ENCODE measurements at regions of chr13 and their contacts with region 1.

Region 1: DNA sequence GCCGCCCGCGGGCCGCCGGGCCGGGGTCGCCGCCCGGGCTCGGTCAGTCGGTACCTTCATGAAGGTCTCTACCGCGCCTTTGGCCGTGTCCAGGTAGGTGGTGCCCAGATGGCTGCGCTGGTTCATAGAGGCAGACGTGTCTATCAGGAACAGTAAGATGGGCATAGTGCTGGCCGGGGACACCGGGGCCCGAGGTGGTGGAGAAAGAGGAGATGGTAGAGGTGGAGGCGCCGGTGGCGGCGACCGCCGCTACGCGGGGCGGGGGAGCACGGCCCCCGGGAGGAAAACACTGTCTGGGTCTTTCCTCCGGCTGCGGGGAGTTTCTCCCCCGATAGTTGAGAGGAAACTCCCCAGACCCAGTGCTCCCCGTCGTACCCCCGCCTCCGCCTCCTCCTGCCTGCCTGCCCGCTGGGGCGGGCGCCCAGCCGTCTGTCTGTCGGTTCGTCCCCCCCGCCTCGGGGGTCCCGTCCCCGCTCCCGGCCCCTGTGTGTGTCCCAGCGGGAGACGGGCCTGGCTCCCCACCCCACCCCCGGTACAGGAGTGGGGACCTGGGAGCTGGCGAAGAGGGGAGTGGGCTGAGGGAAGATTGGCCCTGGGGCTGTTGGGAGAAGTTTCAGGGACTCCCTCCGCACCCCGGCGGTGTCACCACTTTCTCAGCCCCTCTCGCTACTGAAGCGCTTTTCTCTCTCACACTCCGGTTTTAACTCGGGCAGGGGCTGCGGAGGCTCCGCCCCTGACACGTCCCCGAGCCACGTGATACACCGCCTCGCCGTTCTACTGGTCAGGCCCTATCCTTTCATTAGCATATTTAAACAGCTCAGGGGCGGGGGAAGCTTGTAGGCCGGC is at the start of gene INTS6:
- DNase-seq: peak; percentile 96 to 99
- H3K4me3 ChIP-seq: peak within 1 kb of the TSS; percentile 97
- H3K27ac ChIP-seq: peak within 1 kb of the TSS; percentile 86
- H3K4me1 ChIP-seq: peaks cover 18% of the 10 kb centered on the region; the same call in 1 of the 2 replicates
- H3K27me3 ChIP-seq: no peaks in the 10 kb centered on the region
- CTCF ChIP-seq: no peak
- total RNA-seq, gene INTS6: 43.5 and 45.5 TPM in 2 replicates

Region 2: DNA sequence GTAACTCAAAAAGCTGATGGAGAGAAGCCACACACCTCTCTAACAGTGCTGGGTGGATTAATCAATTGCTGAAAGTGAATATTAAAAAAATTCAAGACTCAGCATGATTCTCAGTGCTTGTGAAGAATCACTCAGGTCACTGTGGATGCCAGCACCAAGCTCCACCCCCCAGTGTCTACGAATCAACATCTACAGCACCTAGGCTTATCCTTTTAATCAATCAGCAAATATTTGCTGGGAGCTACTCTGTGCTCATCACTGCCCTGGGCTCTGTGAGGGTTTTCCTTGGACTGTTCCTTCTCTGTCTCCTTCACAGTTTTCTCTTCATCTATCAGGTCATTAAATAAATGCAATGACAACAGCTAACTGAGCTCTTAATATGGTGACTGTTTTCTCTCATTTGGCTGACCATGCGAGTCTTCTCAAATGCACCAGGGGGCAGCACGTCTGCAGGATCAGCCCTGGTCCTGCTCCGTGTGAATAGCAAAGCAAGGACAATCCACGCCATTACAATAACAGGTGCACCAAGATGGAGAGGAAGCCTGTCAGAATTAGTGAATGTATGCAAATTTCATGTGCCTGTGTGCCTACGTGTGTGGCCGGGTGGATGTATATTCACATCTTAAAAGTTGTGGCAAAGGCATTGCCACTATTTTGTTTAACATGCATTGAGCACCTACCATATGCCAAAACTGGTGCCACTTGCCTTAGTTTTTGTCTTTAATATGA is 326.9 kb before region 1 on chr13:
- CTCF ChIA-PET with region 1: no interaction called
- POLR2A ChIA-PET with region 1: interaction called, 20 read pairs
- intact Hi-C with region 1: no loop called
- DNase-seq: peak in 1 of 2 experiments; percentile 41
- H3K4me3 ChIP-seq: no peak overlapping the region
- H3K27ac ChIP-seq: no peak overlapping the region
- H3K4me1 ChIP-seq: no peaks in the 10 kb centered on the region
- H3K27me3 ChIP-seq: peaks cover 19% of the 10 kb centered on the region; the same call in 1 of the 2 replicates
- CTCF ChIP-seq: peak; percentile 78

Region 3: GRCh38 chr13:51583875-51584730 is 131.5 kb after region 1 on chr13 and contains the start of gene WDFY2:
- CTCF ChIA-PET with region 1: interaction called, 4 read pairs
- POLR2A ChIA-PET with region 1: interaction called, 8 read pairs
- intact Hi-C with region 1: loop called (anchors 1 kb)
- DNase-seq: peak; percentile 98 to 99
- H3K4me3 ChIP-seq: peak within 1 kb of the TSS; percentile 91
- H3K27ac ChIP-seq: peak within 1 kb of the TSS; percentile 69
- H3K4me1 ChIP-seq: peaks cover 28% of the 10 kb centered on the region
- H3K27me3 ChIP-seq: no peaks in the 10 kb centered on the region
- CTCF ChIP-seq: 0 out of 2 replicates have a peak, but pooled peaks have one; percentile 11
- total RNA-seq, gene WDFY2: 14.1 and 14.3 TPM in 2 replicates

Region 4: GRCh38 chr13:51674279-51674678 is 221.7 kb after region 1 on chr13:
- CTCF ChIA-PET with region 1: no interaction called
- POLR2A ChIA-PET with region 1: interaction called, 11 read pairs
- intact Hi-C with region 1: no loop called
- DNase-seq: peak; percentile 85 to 96
- H3K4me3 ChIP-seq: peak overlapping the region; percentile 45; the same call in 1 of the 2 replicates
- H3K27ac ChIP-seq: peak overlapping the region; percentile 90
- H3K4me1 ChIP-seq: peaks cover 39% of the 10 kb centered on the region
- H3K27me3 ChIP-seq: no peaks in the 10 kb centered on the region
- CTCF ChIP-seq: no peak

Region 5: GRCh38 chr13:51781246-51782022 is 328.9 kb after region 1 on chr13:
- CTCF ChIA-PET with region 1: no interaction called
- POLR2A ChIA-PET with region 1: interaction called, 20 read pairs
- intact Hi-C with region 1: no loop called
- DNase-seq: no peak
- H3K4me3 ChIP-seq: no peak overlapping the region
- H3K27ac ChIP-seq: no peak overlapping the region
- H3K4me1 ChIP-seq: no peaks in the 10 kb centered on the region
- H3K27me3 ChIP-seq: no peaks in the 10 kb centered on the region
- CTCF ChIP-seq: peak; percentile 54

Region 6: GRCh38 chr13:51803422-51804294 is 351.1 kb after region 1 on chr13 and contains the start of gene DHRS12:
- CTCF ChIA-PET with region 1: no interaction called
- POLR2A ChIA-PET with region 1: interaction called, 14 read pairs
- intact Hi-C with region 1: loop called (anchors 1 kb)
- DNase-seq: peak; percentile 60 to 83
- H3K4me3 ChIP-seq: peak within 1 kb of the TSS; percentile 69
- H3K27ac ChIP-seq: peak within 1 kb of the TSS; percentile 54
- H3K4me1 ChIP-seq: peaks cover 26% of the 10 kb centered on the region
- H3K27me3 ChIP-seq: no peaks in the 10 kb centered on the region
- CTCF ChIP-seq: no peak
- total RNA-seq, gene DHRS12: 6.9 and 11.9 TPM in 2 replicates

Measured in PC-9 (cell line).